Heart left ventricle (tissue), 16 donors: ENCODE measurements at regions of chr3 and their contacts with region 1.

Region 1: GRCh38 chr3:44338010-44338827 is at the start of gene TCAIM:
- DNase-seq: peak; percentile 97 to 99 (median 99)
- ATAC-seq: peak; percentile 97 to 99 (median 98)
- H3K4me3 ChIP-seq: peak within 1 kb of the TSS; percentile 48 to 80 (median 66)
- H3K27ac ChIP-seq: peak within 1 kb of the TSS; percentile 92 to 98 (median 96)
- H3K4me1 ChIP-seq: peaks cover 0 to 42% (median 20%) of the 10 kb centered on the region in 12 donors
- H3K27me3 ChIP-seq: no peaks in the 10 kb centered on the region
- CTCF ChIP-seq: peak in 1 of 12 donors; percentile 2
- POLR2A ChIP-seq: peak; percentile 46 to 85
- total RNA-seq, gene TCAIM: 24.1 to 45.0 (median 32.4) TPM

Region 2: DNA sequence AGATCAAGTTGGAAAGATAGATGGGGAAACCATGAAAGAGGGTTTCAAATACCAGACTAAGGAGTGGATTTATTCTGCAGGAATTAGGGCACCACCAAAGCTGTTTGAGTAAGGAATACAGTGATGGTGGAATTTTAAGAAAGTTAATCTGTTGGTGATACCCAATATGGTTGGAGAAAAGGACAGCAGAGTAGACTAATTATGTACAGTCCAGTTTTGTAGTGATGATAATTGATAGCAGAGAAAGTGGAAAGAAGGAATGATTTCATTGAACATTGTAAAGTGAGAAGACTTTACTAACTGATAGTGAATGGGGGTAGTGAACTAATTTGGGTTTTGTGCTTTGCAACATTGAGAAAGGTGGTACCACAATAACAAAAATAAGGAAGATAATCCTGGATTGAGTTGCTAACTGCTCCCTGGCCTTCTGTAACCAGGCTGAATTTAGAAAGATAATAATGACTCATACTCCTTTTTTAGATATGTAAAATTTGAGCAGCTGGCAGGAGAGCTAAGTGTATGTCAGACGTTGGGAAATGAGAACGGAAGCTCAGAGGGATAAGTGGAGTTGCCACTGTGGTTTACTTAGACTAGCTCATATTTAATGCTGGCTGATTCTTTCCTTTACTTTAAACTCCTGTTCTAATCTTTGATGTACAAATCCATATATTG is 17.3 kb after region 1 on chr3:
- intact Hi-C with region 1: loop called in 2 of 10 experiments (anchors 1 to 2 kb)
- DNase-seq: peak in 1 of 5 donors; percentile 37
- ATAC-seq: peak; percentile 90 to 96 (median 96)
- H3K4me3 ChIP-seq: no peak overlapping the region
- H3K27ac ChIP-seq: peak overlapping the region; percentile 47 to 78 (median 70)
- H3K4me1 ChIP-seq: peaks cover 0 to 27% (median 12%) of the 10 kb centered on the region in 12 donors
- H3K27me3 ChIP-seq: no peaks in the 10 kb centered on the region
- CTCF ChIP-seq: no peak
- POLR2A ChIP-seq: no peak

Region 3: GRCh38 chr3:44477312-44478030 is 139.3 kb after region 1 on chr3 and contains the start of gene ZNF445:
- intact Hi-C with region 1: loop called in 1 of 10 experiments (anchors 10 kb)
- DNase-seq: peak; percentile 79 to 91 (median 85)
- ATAC-seq: peak; percentile 69 to 99 (median 98)
- H3K4me3 ChIP-seq: peak within 1 kb of the TSS; percentile 58 to 96 (median 76)
- H3K27ac ChIP-seq: peak within 1 kb of the TSS; percentile 37 to 87 (median 66)
- H3K4me1 ChIP-seq: peaks cover 0 to 23% (median 18%) of the 10 kb centered on the region in 12 donors
- H3K27me3 ChIP-seq: no peaks in the 10 kb centered on the region
- CTCF ChIP-seq: no peak
- POLR2A ChIP-seq: peak in 1 of 2 donors; percentile 39
- total RNA-seq, gene ZNF445: 5.7 to 19.9 (median 12.3) TPM

Region 4: GRCh38 chr3:44624749-44625480 is 286.7 kb after region 1 on chr3 and contains the start of gene ZNF197:
- intact Hi-C with region 1: loop called in 1 of 10 experiments (anchors 10 kb)
- DNase-seq: peak; percentile 89 to 93 (median 90)
- ATAC-seq: peak; percentile 95 to 99 (median 98)
- H3K4me3 ChIP-seq: peak within 1 kb of the TSS; percentile 70 to 96 (median 92)
- H3K27ac ChIP-seq: peak within 1 kb of the TSS; percentile 75 to 97 (median 93)
- H3K4me1 ChIP-seq: peaks cover 0 to 41% (median 25%) of the 10 kb centered on the region in 12 donors
- H3K27me3 ChIP-seq: no peaks in the 10 kb centered on the region
- CTCF ChIP-seq: peak in 4 of 12 donors; percentile 11 to 52 (median 38)
- POLR2A ChIP-seq: peak in 1 of 2 donors; percentile 43
- total RNA-seq, gene ZNF197: 7.8 to 16.4 (median 11.9) TPM

Region 5: DNA sequence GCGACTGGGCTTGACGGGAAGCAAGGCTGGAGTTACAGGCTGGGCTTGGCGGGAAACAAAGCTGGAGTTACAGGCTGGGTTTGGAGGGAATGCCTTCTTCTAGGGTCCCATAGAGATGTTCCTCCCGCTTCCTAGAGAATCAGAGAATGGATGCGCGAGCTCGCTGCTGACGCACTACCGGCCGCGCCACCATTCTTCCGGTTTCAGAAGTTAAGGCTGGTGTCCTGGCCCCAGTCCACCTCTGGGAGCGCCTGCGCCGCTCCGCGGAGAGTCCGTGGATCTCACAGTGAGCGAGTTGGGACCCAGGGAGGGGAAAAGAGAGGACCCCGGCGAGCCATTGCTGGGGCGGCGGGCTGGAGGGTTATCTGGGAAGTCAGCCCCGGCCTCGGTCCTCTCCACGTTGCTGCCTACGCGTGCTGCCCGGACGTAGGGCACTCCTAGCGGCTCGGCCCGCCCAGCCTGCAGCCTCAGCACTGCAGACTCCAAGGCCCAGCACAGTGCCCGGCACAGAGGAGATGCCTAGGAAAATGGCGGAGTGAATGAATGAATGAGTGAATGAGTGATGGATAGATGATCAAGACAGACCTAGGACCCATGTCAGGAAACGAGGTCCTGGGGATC is 374.3 kb after region 1 on chr3 and contains the start of gene ZNF502:
- intact Hi-C with region 1: loop called in 1 of 10 experiments (anchors 10 kb)
- DNase-seq: peak; percentile 88 to 91 (median 90)
- ATAC-seq: peak; percentile 96 to 100 (median 100)
- H3K4me3 ChIP-seq: peak within 1 kb of the TSS; percentile 58 to 100 (median 80)
- H3K27ac ChIP-seq: peak within 1 kb of the TSS in 11 of 12 donors; percentile 43 to 76 (median 72)
- H3K4me1 ChIP-seq: peaks cover 0 to 12% (median 3%) of the 10 kb centered on the region in 12 donors
- H3K27me3 ChIP-seq: peaks cover 0 to 10% (median 0%) of the 10 kb centered on the region in 9 donors
- CTCF ChIP-seq: peak; percentile 6 to 62 (median 34)
- POLR2A ChIP-seq: no peak
- total RNA-seq, gene ZNF502: 1.9 to 4.8 (median 3.5) TPM